ENCODE measurements at regions of chr15 and their contacts with region 1.

Region 1: DNA sequence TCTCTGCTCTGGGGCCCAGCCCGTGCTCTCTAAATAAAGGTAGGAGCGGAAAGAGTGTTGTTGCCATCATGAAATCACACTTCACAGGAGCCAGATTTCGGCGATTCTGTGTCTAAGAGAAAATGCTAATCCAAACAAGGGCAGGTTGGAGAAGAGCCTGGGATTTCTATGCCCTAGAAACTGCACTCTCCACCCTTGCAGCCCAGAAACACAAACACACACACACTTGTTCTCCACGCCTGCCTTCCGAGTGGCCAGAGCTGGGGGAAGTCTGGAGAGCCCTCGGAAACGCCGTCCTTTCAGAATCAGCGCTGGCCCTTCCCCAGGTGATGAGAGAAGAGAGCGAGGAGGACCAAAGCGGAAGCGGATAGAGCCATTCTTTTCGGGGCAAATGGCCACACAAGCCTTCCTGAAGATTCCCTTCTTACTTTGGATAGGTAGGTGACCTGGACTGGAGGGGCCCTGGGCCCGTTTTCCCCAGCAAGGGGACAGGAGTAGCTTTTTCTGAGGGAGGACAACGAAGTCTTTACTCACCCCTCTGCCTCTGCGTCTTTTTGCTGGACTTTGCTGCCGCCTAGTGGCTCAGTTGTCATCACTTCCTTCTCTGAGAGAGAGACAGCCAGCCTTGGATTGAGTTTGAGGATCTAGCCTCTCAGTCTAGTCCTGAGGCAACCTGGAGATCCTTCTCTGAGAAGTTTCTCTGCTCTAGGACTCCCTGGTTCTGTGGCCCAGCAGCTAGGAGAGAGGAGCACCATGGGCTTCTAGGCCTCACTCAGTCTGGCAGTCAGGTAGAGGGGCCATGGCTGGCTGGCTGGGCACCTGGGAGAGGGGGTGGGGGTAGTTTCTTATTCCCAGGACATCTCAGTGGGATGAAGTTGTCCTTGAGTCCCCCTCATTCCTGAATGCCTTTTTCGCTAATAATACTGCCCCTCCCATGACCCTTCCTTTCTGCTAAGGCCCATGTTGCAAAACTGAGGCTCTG is 37.7 kb downstream of the SENP8 start:
- H3K4me3 Mint-ChIP-seq: peak overlapping the region; percentile 65
- H3K27ac Mint-ChIP-seq: peak overlapping the region; percentile 1
- H3K4me1 Mint-ChIP-seq: peaks cover 22% of the 10 kb centered on the region
- H3K27me3 Mint-ChIP-seq: peaks cover 2% of the 10 kb centered on the region

Region 2: GRCh38 chr15:71743861-71744382 is 412.0 kb before region 1 on chr15:
- intact Hi-C with region 1: loop called (anchors 1 kb)
- H3K4me3 Mint-ChIP-seq: no peak overlapping the region
- H3K27ac Mint-ChIP-seq: no peak overlapping the region
- H3K4me1 Mint-ChIP-seq: no peaks in the 10 kb centered on the region
- H3K27me3 Mint-ChIP-seq: no peaks in the 10 kb centered on the region

Region 3: GRCh38 chr15:71784719-71785118 is 371.2 kb before region 1 on chr15:
- intact Hi-C with region 1: loop called (anchors 2 kb)
- H3K4me3 Mint-ChIP-seq: no peak overlapping the region
- H3K27ac Mint-ChIP-seq: no peak overlapping the region
- H3K4me1 Mint-ChIP-seq: peaks cover 7% of the 10 kb centered on the region
- H3K27me3 Mint-ChIP-seq: peaks cover 2% of the 10 kb centered on the region

Region 4: GRCh38 chr15:72382146-72382545 is 226.2 kb after region 1 on chr15:
- intact Hi-C with region 1: no loop called
- H3K4me3 Mint-ChIP-seq: no peak overlapping the region
- H3K27ac Mint-ChIP-seq: no peak overlapping the region
- H3K4me1 Mint-ChIP-seq: peaks cover 45% of the 10 kb centered on the region
- H3K27me3 Mint-ChIP-seq: peaks cover 2% of the 10 kb centered on the region

Measured in dendritic cell treated with granulocyte-macrophage colony-stimulating factor and Interleukin-4, amounts not matched to agents 40 ng/mL and 50 ng/mL, for 4 days (primary cell).